MCF 10A (cell line): ENCODE measurements at regions of chr15 and their contacts with region 1.

Region 1: DNA sequence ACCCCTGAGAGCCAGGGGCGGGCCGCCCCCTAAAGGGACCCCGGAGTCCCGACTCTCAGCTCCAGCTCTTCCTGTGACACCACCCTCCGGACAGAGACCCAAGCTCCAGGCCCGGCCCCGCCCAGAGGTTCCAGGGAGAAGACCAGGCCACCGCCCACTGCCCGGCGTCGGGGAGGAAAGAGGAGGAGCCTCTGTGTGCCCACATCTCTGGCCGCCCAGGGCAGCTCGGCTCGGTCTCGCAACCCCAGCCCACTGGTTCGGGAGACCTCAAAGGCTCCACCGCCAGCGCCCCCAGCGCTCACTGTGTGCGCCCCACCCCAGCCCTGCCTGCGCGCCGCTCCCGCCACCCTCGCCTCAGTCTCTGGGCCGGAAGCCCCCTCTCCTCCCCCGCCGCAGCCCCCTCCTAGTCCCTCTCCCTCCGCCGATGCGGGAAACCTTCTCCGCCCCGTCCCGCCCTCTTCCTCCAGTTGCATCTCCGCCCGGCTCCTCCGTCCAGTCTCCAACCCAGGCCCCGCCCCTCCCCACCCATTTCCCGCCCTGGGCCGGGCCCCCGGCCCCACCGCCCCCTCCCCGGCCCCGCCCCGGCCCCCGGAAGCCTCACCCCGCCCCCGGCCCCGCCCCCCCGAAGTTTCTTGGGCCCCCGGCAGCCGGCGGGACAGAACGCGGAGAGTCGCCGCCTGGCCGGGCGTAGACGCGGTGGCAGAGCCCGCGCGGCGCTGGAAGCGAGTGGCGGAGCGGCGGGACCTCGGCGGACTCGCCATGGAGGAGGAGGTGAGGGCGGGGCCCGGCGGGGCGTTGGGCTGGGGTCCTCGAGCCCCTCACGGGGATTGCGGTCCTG is at the start of gene PLEKHO2:
- DNase-seq: peak; percentile 93
- H3K4me3 Mint-ChIP-seq: peak within 1 kb of the TSS; percentile 85
- H3K27ac Mint-ChIP-seq: peak within 1 kb of the TSS; percentile 61
- H3K4me1 Mint-ChIP-seq: peaks cover 19% of the 10 kb centered on the region
- H3K27me3 Mint-ChIP-seq: no peaks in the 10 kb centered on the region
- CTCF ChIP-seq: no peak
- total RNA-seq, gene PLEKHO2: 2.0 and 2.7 TPM in 2 replicates

Region 2: GRCh38 chr15:64895285-64896065 is 54.0 kb after region 1 on chr15:
- CTCF ChIA-PET with region 1: no interaction called
- POLR2A ChIA-PET with region 1: no interaction called
- intact Hi-C with region 1: loop called (anchors 5 kb)
- DNase-seq: no peak
- H3K4me3 Mint-ChIP-seq: no peak overlapping the region
- H3K27ac Mint-ChIP-seq: peak overlapping the region; percentile 35
- H3K4me1 Mint-ChIP-seq: peaks cover 21% of the 10 kb centered on the region
- H3K27me3 Mint-ChIP-seq: no peaks in the 10 kb centered on the region
- CTCF ChIP-seq: no peak

Region 3: GRCh38 chr15:65298731-65299130 is 457.3 kb after region 1 on chr15:
- CTCF ChIA-PET with region 1: no interaction called
- POLR2A ChIA-PET with region 1: no interaction called
- intact Hi-C with region 1: loop called (anchors 5 kb)
- DNase-seq: no peak
- H3K4me3 Mint-ChIP-seq: no peak overlapping the region
- H3K27ac Mint-ChIP-seq: no peak overlapping the region
- H3K4me1 Mint-ChIP-seq: peaks cover 11% of the 10 kb centered on the region
- H3K27me3 Mint-ChIP-seq: no peaks in the 10 kb centered on the region
- CTCF ChIP-seq: no peak

Region 4: DNA sequence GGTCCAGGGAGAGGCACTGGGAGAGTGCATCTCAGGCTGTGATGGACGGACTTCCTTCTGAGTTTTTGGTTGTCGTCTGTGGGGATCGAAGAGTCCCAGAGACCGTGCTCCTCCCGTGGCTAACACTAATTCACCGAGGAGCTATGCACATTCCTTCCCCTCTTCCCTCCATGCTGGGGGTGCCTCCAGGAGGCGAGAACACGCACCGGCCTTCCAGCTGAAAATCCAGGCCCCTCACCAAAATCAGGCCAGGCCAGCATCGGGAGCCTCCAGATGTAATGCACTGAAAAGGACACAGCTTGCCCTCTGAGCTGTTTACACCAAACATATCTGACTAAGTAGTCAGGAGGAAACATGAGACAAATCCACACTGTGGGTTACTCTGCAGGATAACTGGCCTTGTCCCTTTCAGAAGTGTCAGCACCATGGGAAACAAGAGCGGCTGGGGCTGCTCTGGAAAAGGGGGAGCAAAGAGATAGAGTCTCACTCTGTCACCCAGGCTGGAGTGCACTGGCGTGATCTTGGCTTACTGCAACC is 468.5 kb after region 1 on chr15:
- CTCF ChIA-PET with region 1: no interaction called
- POLR2A ChIA-PET with region 1: no interaction called
- intact Hi-C with region 1: no loop called
- DNase-seq: no peak
- H3K4me3 Mint-ChIP-seq: no peak overlapping the region
- H3K27ac Mint-ChIP-seq: no peak overlapping the region
- H3K4me1 Mint-ChIP-seq: no peaks in the 10 kb centered on the region
- H3K27me3 Mint-ChIP-seq: peaks cover 1% of the 10 kb centered on the region
- CTCF ChIP-seq: no peak